ENCODE measurements at regions of chr18 and their contacts with region 1.

Region 1: DNA sequence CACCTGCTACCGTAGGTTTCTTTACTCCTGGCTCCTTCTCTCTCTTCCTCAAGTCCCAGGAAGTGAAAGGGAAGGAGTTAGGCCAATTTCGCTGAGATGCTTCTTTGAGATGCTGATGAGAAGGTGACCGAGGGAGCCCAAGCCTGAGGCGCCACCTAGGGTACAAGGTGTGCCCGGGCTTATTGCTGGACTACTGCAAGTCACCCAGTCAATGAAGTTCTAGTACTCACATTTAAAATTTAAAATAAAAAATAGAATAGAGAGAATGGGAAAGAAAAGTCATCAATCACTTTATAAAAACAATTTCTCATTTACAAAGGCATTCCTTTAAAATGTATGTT is 45.3 kb downstream of the ACAA2 start:
- DNase-seq: peak in 2 of 5 donors; percentile 36 to 58
- H3K4me3 ChIP-seq: no peak overlapping the region
- H3K27ac ChIP-seq: no peak overlapping the region
- H3K4me1 ChIP-seq: no peaks in the 10 kb centered on the region
- H3K27me3 ChIP-seq: no peaks in the 10 kb centered on the region
- CTCF ChIP-seq: peak in 1 of 3 donors; percentile 24
- EP300 ChIP-seq: no peak
- POLR2A ChIP-seq: no peak

Region 2: GRCh38 chr18:49561289-49562193 is 206.5 kb before region 1 on chr18 and contains the start of gene LIPG:
- intact Hi-C with region 1: loop called in 2 of 4 experiments (anchors 10 kb)
- DNase-seq: peak in 2 of 5 donors; percentile 35 to 43
- H3K4me3 ChIP-seq: peak within 1 kb of the TSS; percentile 27
- H3K27ac ChIP-seq: no peak within 1 kb of the TSS
- H3K4me1 ChIP-seq: peaks cover 5% of the 10 kb centered on the region
- H3K27me3 ChIP-seq: no peaks in the 10 kb centered on the region
- CTCF ChIP-seq: no peak
- EP300 ChIP-seq: no peak
- POLR2A ChIP-seq: no peak
- total RNA-seq, gene LIPG: 0.23 to 3.9 (median 0.51) TPM in 6 of 7 donors, not detected in the other

Measured in ovary (tissue), 10 donors.